Activated CD4-positive, alpha-beta T cell treated with anti-CD3 and anti-CD28 coated beads, Interleukin-2, amount 10 ng/mL, durations not matched to agents 24 days and 14 days (primary cell): ENCODE measurements at regions of chr9 and their contacts with region 1.

Region 1: GRCh38 chr9:100028201-100028784 is 70.5 kb downstream of the ERP44 start:
- DNase-seq: peak; percentile 89
- H3K4me3 Mint-ChIP-seq: no peak overlapping the region
- H3K27ac Mint-ChIP-seq: no peak overlapping the region
- H3K4me1 Mint-ChIP-seq: peaks cover 3% of the 10 kb centered on the region
- H3K27me3 Mint-ChIP-seq: no peaks in the 10 kb centered on the region

Region 2: DNA sequence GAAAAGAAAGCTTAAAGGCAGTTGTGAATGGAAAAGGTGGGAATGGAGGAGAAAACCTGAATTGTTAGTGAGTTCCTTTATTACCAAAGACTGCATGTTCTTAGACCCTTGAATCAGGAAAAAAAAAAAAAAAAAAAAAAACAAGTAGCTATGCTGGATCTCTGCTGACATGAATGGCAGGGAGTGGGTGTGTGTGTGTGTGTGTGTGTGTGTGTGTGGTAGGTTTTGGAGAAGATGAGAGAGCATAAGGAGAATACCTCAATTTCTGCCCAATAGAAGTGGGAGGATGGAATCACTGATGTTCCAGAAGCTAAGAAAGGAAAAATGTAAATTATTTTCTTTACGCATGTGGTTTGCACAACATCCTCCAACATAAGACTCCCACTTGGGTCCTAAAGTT is 232.1 kb before region 1 on chr9:
- intact Hi-C with region 1: no loop called
- DNase-seq: no peak
- H3K4me3 Mint-ChIP-seq: no peak overlapping the region
- H3K27ac Mint-ChIP-seq: no peak overlapping the region
- H3K4me1 Mint-ChIP-seq: no peaks in the 10 kb centered on the region
- H3K27me3 Mint-ChIP-seq: peaks cover 38% of the 10 kb centered on the region

Region 3: GRCh38 chr9:100084734-100085133 is 56.4 kb after region 1 on chr9:
- intact Hi-C with region 1: loop called (anchors 5 kb)
- DNase-seq: no peak
- H3K4me3 Mint-ChIP-seq: peak overlapping the region; percentile 27
- H3K27ac Mint-ChIP-seq: no peak overlapping the region
- H3K4me1 Mint-ChIP-seq: peaks cover 49% of the 10 kb centered on the region
- H3K27me3 Mint-ChIP-seq: no peaks in the 10 kb centered on the region

Region 4: GRCh38 chr9:100120286-100120685 is 92.0 kb after region 1 on chr9:
- intact Hi-C with region 1: loop called (anchors 5 kb)
- DNase-seq: no peak
- H3K4me3 Mint-ChIP-seq: no peak overlapping the region
- H3K27ac Mint-ChIP-seq: no peak overlapping the region
- H3K4me1 Mint-ChIP-seq: peaks cover 3% of the 10 kb centered on the region
- H3K27me3 Mint-ChIP-seq: no peaks in the 10 kb centered on the region

Region 5: GRCh38 chr9:100216178-100216787 is 188.0 kb after region 1 on chr9:
- intact Hi-C with region 1: loop called (anchors 1 kb)
- DNase-seq: peak; percentile 89
- H3K4me3 Mint-ChIP-seq: no peak overlapping the region
- H3K27ac Mint-ChIP-seq: no peak overlapping the region
- H3K4me1 Mint-ChIP-seq: peaks cover 2% of the 10 kb centered on the region
- H3K27me3 Mint-ChIP-seq: no peaks in the 10 kb centered on the region

Region 6: DNA sequence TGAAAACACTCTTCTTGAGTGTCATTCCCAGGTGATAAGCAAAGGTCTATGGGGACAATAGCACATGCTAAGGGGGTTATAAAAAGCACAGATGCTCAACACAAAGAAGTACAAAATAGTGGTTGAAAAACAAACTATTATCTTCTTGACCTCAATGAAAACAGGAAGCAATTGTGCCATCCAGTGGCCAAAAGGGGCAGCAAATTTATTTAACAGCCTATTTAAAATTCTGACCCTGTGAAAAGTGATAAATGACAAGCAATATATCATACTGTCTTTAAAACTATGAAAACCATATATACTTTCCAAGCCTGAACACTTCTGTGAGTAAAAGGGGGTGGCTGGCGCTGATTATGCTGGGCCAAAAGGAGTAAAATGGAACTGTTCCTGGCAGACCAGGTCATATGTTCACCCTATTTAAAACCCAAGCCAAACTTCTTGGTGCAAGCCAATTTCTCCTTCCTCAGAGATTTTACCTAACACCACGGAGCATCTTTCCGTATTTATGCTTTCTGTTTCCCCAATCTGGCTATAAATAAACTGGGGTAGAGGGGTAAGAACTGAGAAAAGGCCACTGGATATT is 294.8 kb after region 1 on chr9:
- intact Hi-C with region 1: loop called (anchors 1 kb)
- DNase-seq: peak; percentile 67
- H3K4me3 Mint-ChIP-seq: no peak overlapping the region
- H3K27ac Mint-ChIP-seq: no peak overlapping the region
- H3K4me1 Mint-ChIP-seq: peaks cover 2% of the 10 kb centered on the region
- H3K27me3 Mint-ChIP-seq: no peaks in the 10 kb centered on the region

Region 7: GRCh38 chr9:100437860-100438805 is 409.8 kb after region 1 on chr9:
- intact Hi-C with region 1: loop called (anchors 2 kb)
- DNase-seq: peak; percentile 90
- H3K4me3 Mint-ChIP-seq: no peak overlapping the region
- H3K27ac Mint-ChIP-seq: no peak overlapping the region
- H3K4me1 Mint-ChIP-seq: peaks cover 2% of the 10 kb centered on the region
- H3K27me3 Mint-ChIP-seq: no peaks in the 10 kb centered on the region